ENCODE measurements at regions of chr15 and their contacts with region 1.

Region 1: DNA sequence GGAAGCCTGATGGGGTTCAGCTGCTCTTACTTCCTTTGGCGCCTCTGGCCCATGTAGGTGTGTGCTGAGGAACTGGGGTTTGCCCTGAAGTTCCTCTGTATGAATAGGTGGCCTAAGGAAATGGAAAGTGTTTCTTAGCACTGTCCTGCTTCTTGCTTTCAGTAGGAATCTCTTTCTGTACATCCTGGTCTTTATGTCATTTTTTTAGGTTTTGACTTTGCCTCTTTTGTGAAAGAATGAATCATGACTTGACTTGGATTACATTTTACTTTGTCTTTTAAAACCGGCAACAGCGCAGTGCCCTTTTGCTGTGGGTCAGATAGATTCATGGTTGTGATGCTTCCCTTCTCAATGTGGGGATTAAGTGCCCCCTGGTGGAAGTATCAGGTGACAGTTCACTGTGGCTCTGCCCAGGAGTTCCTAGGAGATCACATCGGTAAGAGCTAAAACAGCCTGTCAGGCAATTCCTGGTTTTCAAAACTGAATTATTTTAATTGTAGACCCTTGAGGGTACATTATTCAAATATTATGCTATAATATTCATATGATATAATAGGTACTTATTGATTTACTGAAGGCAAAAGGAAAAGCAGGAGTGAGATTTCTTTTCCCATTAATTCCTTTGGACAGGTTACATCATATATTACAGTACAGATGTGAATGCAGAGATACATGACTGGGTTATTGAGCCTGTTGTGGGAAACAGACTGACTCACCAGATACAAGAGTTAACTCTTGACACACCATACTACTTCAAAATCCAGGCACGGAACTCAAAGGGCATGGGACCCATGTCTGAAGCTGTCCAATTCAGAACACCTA is 95.4 kb downstream of the HCN4 start:
- DNase-seq: peak; percentile 70
- ATAC-seq: peak; percentile 76
- H3K4me3 Mint-ChIP-seq: no peak overlapping the region
- H3K27ac Mint-ChIP-seq: no peak overlapping the region
- H3K4me1 Mint-ChIP-seq: peaks cover 2% of the 10 kb centered on the region
- H3K27me3 Mint-ChIP-seq: no peaks in the 10 kb centered on the region

Region 2: DNA sequence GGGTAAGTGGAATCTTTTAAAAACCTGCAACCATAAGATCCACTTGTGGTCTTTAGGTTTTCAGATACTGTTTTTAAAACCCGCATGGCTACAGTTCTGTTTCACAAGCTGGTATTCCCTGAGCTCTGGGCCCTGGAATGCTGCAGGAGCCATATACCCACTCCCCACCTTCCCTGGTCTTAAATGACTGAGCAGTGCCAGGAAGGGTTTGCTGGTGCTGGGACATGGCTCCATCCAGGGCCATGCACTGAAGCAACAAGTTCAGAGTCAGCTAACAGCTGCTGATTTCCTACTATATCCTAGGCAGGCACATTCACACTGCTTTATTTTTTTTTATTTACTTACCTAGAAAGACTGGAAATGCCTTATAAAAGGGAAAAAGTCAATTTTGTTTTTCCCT is 18.0 kb after region 1 on chr15:
- CTCF ChIA-PET with region 1: interaction called, 12 read pairs
- DNase-seq: no peak
- ATAC-seq: no peak
- H3K4me3 Mint-ChIP-seq: no peak overlapping the region
- H3K27ac Mint-ChIP-seq: no peak overlapping the region
- H3K4me1 Mint-ChIP-seq: peaks cover 9% of the 10 kb centered on the region
- H3K27me3 Mint-ChIP-seq: no peaks in the 10 kb centered on the region

Region 3: DNA sequence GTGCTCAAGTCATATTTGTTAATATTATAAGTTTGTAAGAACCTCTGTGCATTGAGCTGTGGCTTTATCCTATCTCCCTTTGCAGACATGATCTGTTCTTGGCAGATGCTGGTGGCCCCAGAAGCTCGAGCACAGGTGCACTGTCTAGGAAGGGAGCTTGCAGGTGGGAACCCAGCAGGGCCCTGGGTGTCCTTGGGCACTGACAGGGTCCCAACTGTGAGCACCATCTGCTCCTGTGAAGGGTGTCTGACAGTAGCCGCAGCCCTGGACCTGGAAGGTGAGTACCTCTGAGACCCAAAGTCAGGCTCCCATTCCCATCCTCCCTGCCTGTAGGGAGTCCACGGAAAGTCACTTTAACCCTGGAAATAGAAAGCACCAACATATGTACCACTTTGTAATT is 167.2 kb after region 1 on chr15:
- CTCF ChIA-PET with region 1: no interaction called
- DNase-seq: no peak
- ATAC-seq: no peak
- H3K4me3 Mint-ChIP-seq: no peak overlapping the region
- H3K27ac Mint-ChIP-seq: no peak overlapping the region
- H3K4me1 Mint-ChIP-seq: peaks cover 18% of the 10 kb centered on the region
- H3K27me3 Mint-ChIP-seq: peaks cover 31% of the 10 kb centered on the region